A549 (cell line): ENCODE measurements at regions of chr4 and their contacts with region 1.

Region 1: GRCh38 chr4:184168406-184169019 is 49.2 kb downstream of the ENPP6 start:
- DNase-seq: peak; percentile 46 to 56
- ATAC-seq: peak; percentile 97 to 99
- H3K4me3 ChIP-seq: no peak overlapping the region
- H3K27ac ChIP-seq: peak overlapping the region in 1 of 2 experiments; percentile 62; a peak in 3 of 6 replicates
- H3K4me1 ChIP-seq: no peaks in the 10 kb centered on the region
- CTCF ChIP-seq: peak; percentile 82
- EP300 ChIP-seq: no peak
- POLR2A ChIP-seq: no peak
- RAD21 ChIP-seq: peak; percentile 77 to 84

Region 2: GRCh38 chr4:183830438-183830985 is 338.0 kb before region 1 on chr4:
- CTCF ChIA-PET with region 1: interaction called, 11 read pairs
- POLR2A ChIA-PET with region 1: no interaction called
- DNase-seq: no peak
- ATAC-seq: no peak
- H3K4me3 ChIP-seq: no peak overlapping the region
- H3K27ac ChIP-seq: no peak overlapping the region
- H3K4me1 ChIP-seq: 0 out of 3 replicates have a peak, but pooled peaks cover 7% of the 10 kb centered on the region
- CTCF ChIP-seq: no peak
- EP300 ChIP-seq: no peak
- POLR2A ChIP-seq: no peak
- RAD21 ChIP-seq: no peak

Region 3: GRCh38 chr4:183840311-183840710 is 328.2 kb before region 1 on chr4:
- CTCF ChIA-PET with region 1: interaction called, 47 read pairs
- POLR2A ChIA-PET with region 1: no interaction called
- DNase-seq: peak; percentile 45 to 74
- ATAC-seq: peak; percentile 86 to 90; a peak in 5 of 6 replicates
- H3K4me3 ChIP-seq: no peak overlapping the region
- H3K27ac ChIP-seq: no peak overlapping the region
- H3K4me1 ChIP-seq: no peaks in the 10 kb centered on the region
- CTCF ChIP-seq: peak; percentile 83
- EP300 ChIP-seq: no peak
- POLR2A ChIP-seq: no peak
- RAD21 ChIP-seq: peak; percentile 94 to 98

Region 4: DNA sequence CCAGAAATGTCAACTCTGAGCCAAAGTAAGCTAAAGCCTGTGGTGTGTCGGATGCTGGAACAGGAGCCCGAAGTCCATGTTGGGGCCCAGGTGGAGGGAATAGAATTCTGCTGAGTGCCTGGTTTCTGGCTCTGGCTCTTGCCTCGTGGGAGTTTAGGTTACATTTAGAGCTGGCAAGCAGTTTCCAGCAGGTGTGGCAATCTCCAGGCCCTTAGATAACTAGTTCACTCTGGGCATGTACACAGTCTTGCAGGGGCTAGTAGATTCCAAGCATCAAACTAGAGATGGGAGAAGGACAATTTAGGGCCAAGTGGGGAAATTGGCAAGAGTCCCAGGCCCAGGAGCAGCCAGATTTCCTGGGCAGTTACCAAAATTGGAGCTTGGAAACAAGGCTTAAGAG is 319.7 kb before region 1 on chr4:
- CTCF ChIA-PET with region 1: interaction called, 17 read pairs
- POLR2A ChIA-PET with region 1: no interaction called
- DNase-seq: no peak
- ATAC-seq: no peak
- H3K4me3 ChIP-seq: no peak overlapping the region
- H3K27ac ChIP-seq: no peak overlapping the region
- H3K4me1 ChIP-seq: no peaks in the 10 kb centered on the region
- CTCF ChIP-seq: no peak
- EP300 ChIP-seq: no peak
- POLR2A ChIP-seq: no peak
- RAD21 ChIP-seq: no peak

Region 5: GRCh38 chr4:184100297-184100885 is 68.1 kb before region 1 on chr4:
- CTCF ChIA-PET with region 1: interaction called, 14 read pairs
- POLR2A ChIA-PET with region 1: no interaction called
- DNase-seq: peak; percentile 14 to 23
- ATAC-seq: peak; percentile 76 to 83; a peak in 5 of 6 replicates
- H3K4me3 ChIP-seq: no peak overlapping the region
- H3K27ac ChIP-seq: 0 out of 6 replicates have a peak overlapping the region, but pooled peaks of 1 of the 2 experiments have one; percentile 13
- H3K4me1 ChIP-seq: peaks cover 11% of the 10 kb centered on the region
- CTCF ChIP-seq: peak; percentile 38
- EP300 ChIP-seq: no peak
- POLR2A ChIP-seq: no peak
- RAD21 ChIP-seq: peak; percentile 60 to 67

Region 6: DNA sequence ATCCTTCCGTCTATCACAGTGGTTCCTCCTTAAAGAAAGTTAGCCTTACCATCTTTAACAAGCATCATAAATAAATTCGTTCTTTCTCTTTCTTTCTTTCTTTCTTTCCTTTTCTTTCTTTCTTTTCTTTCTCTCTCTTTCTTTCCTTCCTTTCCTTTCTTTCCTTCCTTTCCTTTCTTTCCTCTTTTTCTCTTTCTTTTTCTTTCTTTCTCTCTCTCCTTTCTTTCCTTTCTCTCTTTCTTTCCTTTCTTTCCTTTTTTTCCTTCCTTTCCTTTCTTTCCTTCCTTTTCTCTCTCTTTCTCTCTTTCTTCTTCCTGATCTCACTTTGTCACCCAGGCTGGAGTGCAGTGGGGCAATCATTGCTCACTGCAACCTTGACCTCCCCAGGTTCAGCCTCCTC is 11.2 kb before region 1 on chr4:
- CTCF ChIA-PET with region 1: interaction called, 15 read pairs
- POLR2A ChIA-PET with region 1: no interaction called
- DNase-seq: no peak
- ATAC-seq: no peak
- H3K4me3 ChIP-seq: no peak overlapping the region
- H3K27ac ChIP-seq: no peak overlapping the region
- H3K4me1 ChIP-seq: no peaks in the 10 kb centered on the region
- CTCF ChIP-seq: no peak
- EP300 ChIP-seq: no peak
- POLR2A ChIP-seq: no peak
- RAD21 ChIP-seq: no peak

Region 7: GRCh38 chr4:184188443-184189328 is 20.2 kb after region 1 on chr4:
- CTCF ChIA-PET with region 1: interaction called, 13 read pairs
- POLR2A ChIA-PET with region 1: no interaction called
- DNase-seq: no peak
- ATAC-seq: no peak
- H3K4me3 ChIP-seq: no peak overlapping the region
- H3K27ac ChIP-seq: no peak overlapping the region
- H3K4me1 ChIP-seq: no peaks in the 10 kb centered on the region
- CTCF ChIP-seq: no peak
- EP300 ChIP-seq: no peak
- POLR2A ChIP-seq: no peak
- RAD21 ChIP-seq: no peak